ENCODE measurements at regions of chr16 and their contacts with region 1.

Region 1: DNA sequence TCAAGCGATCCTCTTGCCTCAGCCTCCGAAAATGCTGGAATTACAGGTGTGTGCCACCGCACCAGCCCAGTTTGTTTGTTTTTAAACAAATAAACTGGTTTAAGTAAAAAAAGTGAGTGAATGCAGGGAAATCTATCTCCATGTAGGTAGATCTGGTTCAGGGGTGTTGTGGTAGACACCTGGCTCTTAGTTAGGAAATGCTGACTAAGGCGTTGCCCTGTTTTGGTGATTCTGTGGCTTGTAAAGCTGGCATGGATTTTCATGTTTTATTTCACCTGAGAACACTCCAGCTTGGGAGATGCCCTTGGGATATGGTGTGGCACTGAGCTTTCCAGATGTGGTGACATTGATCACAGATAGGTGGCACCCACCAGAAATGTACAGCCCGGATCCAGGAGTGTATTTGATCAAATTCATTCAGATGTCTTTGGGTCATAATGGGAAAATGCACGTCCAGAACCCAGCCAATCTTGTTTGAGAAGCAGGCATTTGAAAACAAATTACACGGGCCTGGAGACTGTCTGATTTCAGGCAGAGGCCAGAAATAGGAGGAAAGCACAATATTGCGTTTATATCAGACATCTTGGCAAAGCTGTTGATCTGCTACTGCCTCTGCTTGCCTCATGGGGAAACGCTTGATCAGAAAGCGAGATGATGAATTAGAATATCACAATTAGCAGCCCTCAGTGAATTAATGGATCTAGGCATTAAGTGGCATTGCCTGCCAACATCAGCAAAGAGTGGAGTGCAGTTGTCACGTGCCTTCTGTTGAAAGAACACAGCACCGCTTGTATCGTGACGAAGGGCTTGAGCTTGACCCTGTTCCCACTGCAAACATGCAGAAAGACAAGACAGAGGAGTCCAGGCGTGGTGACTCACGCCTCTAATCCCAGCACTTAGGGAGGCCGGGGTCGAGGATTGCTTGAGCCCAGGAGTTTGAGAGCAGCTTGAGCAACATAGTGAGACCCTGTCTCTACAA is 7.3 kb upstream of the IL34 start:
- DNase-seq: no peak
- ATAC-seq: peak; percentile 60
- H3K4me3 ChIP-seq: no peak overlapping the region
- H3K27ac ChIP-seq: peak overlapping the region; percentile 32 to 64
- H3K4me1 ChIP-seq: peaks cover 0 to 8% of the 10 kb centered on the region in 2 donors
- H3K27me3 ChIP-seq: no peaks in the 10 kb centered on the region

Region 2: GRCh38 chr16:70576431-70577255 is 62.5 kb before region 1 on chr16:
- intact Hi-C with region 1: loop called (anchors 5 kb)
- DNase-seq: no peak
- ATAC-seq: no peak
- H3K4me3 ChIP-seq: no peak overlapping the region
- H3K27ac ChIP-seq: peak overlapping the region; percentile 69 to 94
- H3K4me1 ChIP-seq: peaks cover 7% of the 10 kb centered on the region in 2 donors
- H3K27me3 ChIP-seq: no peaks in the 10 kb centered on the region

Region 3: GRCh38 chr16:70592106-70592571 is 47.0 kb before region 1 on chr16:
- intact Hi-C with region 1: loop called in 1 of 2 experiments (anchors 2 kb)
- DNase-seq: peak; percentile 72 to 82
- ATAC-seq: peak; percentile 42
- H3K4me3 ChIP-seq: no peak overlapping the region
- H3K27ac ChIP-seq: peak overlapping the region in 1 of 2 donors; percentile 29
- H3K4me1 ChIP-seq: no peaks in the 10 kb centered on the region
- H3K27me3 ChIP-seq: no peaks in the 10 kb centered on the region

Measured in aorta (tissue), 5 donors.